ENCODE measurements at regions of chr5 and their contacts with region 1.

Region 1: DNA sequence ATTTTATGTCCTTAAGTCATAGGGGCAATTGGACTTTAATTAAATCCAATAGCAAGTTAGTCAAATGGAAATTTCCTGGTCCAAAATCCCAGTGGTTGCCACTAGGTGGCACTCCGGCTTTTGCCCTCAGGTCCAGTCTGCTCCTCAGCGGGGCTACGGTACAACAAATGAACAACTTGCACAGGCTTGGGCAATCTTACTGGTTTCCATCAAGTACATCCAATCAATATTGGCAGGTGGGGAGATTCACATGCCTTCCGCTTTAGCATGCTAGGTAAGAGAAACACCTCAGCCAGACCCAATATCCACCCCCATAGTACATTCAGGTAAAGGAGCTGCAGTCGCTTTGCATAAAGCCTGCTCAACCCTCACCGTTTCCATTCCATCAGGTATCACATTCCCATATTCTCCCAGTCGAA is 6.3 kb upstream of the MXD3 start:
- DNase-seq: no peak

Region 2: GRCh38 chr5:177368869-177369644 is 51.1 kb after region 1 on chr5:
- intact Hi-C with region 1: loop called (anchors 5 kb)
- DNase-seq: no peak

Region 3: GRCh38 chr5:177390363-177391300 is 72.7 kb after region 1 on chr5:
- intact Hi-C with region 1: loop called (anchors 5 kb)
- DNase-seq: peak; percentile 90

Measured in cardiac septum (tissue), 1 donor.